Activated naive CD4-positive, alpha-beta T cell treated with anti-CD3 and anti-CD28 coated beads for 36 hours (primary cell): ENCODE measurements at regions of chr3 and their contacts with region 1.

Region 1: GRCh38 chr3:42581709-42582473 is at the start of gene SEC22C:
- DNase-seq: peak; percentile 97
- H3K4me3 Mint-ChIP-seq: peak within 1 kb of the TSS; percentile 90
- H3K27ac Mint-ChIP-seq: peak within 1 kb of the TSS; percentile 93
- H3K4me1 Mint-ChIP-seq: peaks cover 39% of the 10 kb centered on the region
- H3K27me3 Mint-ChIP-seq: no peaks in the 10 kb centered on the region
- total RNA-seq, gene SEC22C: 41.2 to 45.9 TPM

Region 2: GRCh38 chr3:42556089-42556632 is 25.7 kb before region 1 on chr3:
- CTCF ChIA-PET with region 1: no interaction called
- intact Hi-C with region 1: loop called (anchors 1 kb)
- DNase-seq: peak; percentile 53
- H3K4me3 Mint-ChIP-seq: no peak overlapping the region
- H3K27ac Mint-ChIP-seq: peak overlapping the region; percentile 80
- H3K4me1 Mint-ChIP-seq: peaks cover 24% of the 10 kb centered on the region
- H3K27me3 Mint-ChIP-seq: no peaks in the 10 kb centered on the region

Region 3: DNA sequence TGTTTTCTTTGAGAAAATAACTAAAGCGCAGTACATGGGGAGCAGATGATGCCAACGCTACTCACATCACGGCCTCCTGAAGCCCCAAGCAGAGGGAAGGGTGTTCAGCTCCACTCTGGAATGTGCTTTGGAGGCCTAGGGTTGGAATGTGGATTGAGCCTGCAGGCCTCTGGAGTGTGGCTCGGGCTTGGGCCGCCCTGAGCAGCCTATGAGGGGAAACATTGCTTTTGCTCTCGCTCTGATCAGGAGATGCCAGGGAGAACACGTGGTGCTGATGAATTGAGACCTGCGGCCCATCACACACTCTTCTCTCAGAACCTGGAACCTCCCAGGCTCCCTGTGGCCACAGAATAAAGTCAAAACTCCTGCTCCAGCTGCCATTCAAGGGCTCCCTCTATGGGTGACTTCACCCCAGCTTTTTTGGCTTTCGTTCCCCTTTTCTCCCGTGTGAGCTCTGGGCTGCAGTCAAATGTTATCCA is 167.9 kb after region 1 on chr3:
- CTCF ChIA-PET with region 1: interaction called, 24 read pairs
- intact Hi-C with region 1: loop called (anchors 1 kb)
- DNase-seq: peak; percentile 29
- H3K4me3 Mint-ChIP-seq: no peak overlapping the region
- H3K27ac Mint-ChIP-seq: no peak overlapping the region
- H3K4me1 Mint-ChIP-seq: peaks cover 26% of the 10 kb centered on the region
- H3K27me3 Mint-ChIP-seq: no peaks in the 10 kb centered on the region

Region 4: DNA sequence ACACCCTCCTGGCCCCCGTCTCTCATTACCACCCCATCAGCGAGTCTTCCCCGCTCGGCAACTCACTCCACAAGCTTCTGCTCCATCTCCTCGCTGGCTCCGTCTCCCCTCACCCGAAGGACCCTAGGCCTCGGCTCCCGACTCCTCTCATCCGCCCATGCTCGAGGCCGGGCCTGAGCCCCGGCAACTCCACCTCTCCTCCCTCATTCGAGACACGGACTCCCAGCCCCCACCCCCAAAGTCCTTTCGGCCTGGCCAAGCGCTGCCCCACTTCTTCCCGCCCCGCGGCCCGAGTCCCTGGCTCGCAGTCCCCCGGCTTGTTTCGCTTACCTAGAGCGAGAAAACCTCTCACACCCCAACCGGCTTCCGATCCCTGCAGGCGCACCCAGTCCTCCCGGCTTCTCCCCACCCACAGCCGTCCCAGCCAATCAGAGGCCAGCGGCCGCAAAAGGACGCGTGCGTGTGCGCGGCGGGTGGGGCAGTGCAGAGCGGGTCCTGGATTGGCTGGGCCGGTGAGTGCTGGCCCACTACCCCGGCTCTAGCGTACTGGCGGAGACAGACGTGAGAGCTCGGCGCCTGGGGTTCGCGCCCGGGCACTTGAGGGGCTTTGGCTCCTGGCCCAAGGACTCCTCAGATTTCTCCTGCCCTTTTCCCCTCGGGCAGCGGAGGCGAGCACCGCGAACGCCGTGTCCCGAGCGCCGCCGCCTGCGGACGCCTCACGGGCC is 222.4 kb after region 1 on chr3 and contains the start of gene HIGD1A:
- CTCF ChIA-PET with region 1: no interaction called
- intact Hi-C with region 1: loop called (anchors 5 kb)
- DNase-seq: peak; percentile 95
- H3K4me3 Mint-ChIP-seq: peak within 1 kb of the TSS; percentile 96
- H3K27ac Mint-ChIP-seq: peak within 1 kb of the TSS; percentile 86
- H3K4me1 Mint-ChIP-seq: peaks cover 42% of the 10 kb centered on the region
- H3K27me3 Mint-ChIP-seq: peaks cover 11% of the 10 kb centered on the region
- total RNA-seq, gene HIGD1A: 57.1 to 66.4 TPM

Region 5: DNA sequence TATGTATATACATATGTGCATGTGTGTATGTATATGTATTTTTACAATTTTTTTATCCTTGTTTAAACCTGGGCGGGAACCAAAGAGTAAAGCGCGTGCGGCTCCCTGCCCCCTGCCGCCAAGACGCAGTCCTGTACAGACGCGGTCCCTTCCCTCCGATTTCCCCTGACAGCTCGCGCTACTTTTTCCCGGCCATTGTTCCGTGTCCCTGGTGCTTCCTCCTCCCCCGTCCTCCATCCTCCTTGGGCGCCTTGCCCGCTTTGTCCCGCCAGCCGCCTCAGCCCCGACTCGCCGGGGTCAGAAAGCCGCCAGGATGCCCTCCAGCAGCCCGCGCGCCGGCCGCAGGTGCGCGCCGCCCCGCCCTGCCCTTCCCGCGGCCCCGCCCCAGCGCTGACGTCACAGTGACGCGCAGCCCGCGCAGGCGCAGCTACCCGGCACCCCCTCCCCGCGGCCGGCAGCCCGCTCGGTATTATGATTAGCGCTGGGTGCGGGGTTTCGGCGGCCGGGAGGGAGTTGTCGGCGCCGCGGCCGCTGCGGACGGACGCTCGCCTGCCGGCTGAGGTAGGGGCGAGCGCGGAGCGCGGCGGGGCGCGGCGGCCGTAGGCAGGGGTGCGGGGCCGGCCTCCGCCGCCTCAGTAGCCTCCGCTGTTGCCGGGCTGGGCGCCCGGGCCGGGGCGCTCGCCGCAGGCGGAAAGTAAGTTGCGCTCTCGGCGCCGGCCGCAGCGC is 704.4 kb after region 1 on chr3 and contains the start of gene SNRK:
- CTCF ChIA-PET with region 1: no interaction called
- intact Hi-C with region 1: loop called (anchors 10 kb)
- DNase-seq: peak; percentile 91
- H3K4me3 Mint-ChIP-seq: peak within 1 kb of the TSS; percentile 91
- H3K27ac Mint-ChIP-seq: peak within 1 kb of the TSS; percentile 93
- H3K4me1 Mint-ChIP-seq: peaks cover 33% of the 10 kb centered on the region
- H3K27me3 Mint-ChIP-seq: no peaks in the 10 kb centered on the region
- total RNA-seq, gene SNRK: 21.1 TPM